ENCODE measurements at regions of chr1 and their contacts with region 1.

Region 1: DNA sequence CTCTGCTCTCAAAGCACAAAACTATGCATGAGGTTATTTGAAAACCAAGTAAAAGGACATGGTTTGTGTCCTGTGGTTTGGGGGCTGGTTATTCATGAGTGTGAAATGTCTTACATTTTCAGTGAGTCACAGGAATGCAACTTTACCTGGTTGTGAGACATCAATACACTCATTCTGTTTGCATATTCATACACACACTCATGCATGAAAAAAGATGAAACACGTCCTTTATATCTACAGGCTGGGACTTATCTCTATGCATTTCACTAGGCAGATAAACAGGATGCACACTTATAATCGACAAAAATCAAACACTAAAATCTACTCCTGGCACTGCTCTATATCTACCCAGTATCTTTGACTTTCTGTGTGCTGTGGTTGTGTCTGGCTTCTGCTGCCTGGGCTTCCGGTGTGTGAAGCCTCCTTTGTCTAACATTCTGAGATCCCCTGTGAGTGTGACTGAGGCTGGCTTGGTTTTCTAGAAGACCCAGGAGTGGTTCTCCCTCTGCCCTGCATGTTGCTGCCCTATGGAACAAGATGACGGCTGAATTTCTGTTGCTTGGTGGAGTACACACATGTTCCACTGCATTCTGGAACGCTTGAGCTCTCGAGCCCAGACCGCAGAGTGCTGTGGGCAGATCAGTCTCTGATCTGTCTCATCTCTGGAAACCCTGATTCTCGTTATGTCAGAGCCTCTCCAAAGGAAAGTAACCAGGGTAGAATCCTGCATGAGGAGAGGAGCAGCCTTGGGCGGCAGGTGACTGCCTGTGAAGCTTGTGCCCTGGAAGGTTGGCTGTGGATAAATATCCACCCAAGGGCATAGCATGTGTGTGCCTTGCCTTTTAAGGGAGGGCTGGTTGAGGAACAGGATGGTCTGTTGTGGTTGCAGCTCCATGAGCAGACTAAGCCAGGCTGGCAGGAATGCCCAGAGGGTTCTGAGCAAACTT is 19.7 kb upstream of the FASLG start:
- DNase-seq: peak; percentile 100
- ATAC-seq: peak; percentile 78
- H3K4me3 ChIP-seq: peak overlapping the region; percentile 36
- H3K27ac ChIP-seq: peak overlapping the region; percentile 78
- H3K4me1 ChIP-seq: peaks cover 71% of the 10 kb centered on the region
- H3K27me3 ChIP-seq: no peaks in the 10 kb centered on the region
- CTCF ChIP-seq: no peak

Region 2: GRCh38 chr1:172588296-172589291 is 50.6 kb before region 1 on chr1:
- CTCF ChIA-PET with region 1: interaction called, 3 read pairs
- POLR2A ChIA-PET with region 1: no interaction called
- intact Hi-C with region 1: loop called (anchors 1 kb)
- DNase-seq: peak; percentile 100
- ATAC-seq: peak; percentile 90
- H3K4me3 ChIP-seq: peak overlapping the region; percentile 46
- H3K27ac ChIP-seq: peak overlapping the region; percentile 75
- H3K4me1 ChIP-seq: peaks cover 61% of the 10 kb centered on the region
- H3K27me3 ChIP-seq: no peaks in the 10 kb centered on the region
- CTCF ChIP-seq: no peak

Region 3: GRCh38 chr1:172609528-172609927 is 29.6 kb before region 1 on chr1:
- CTCF ChIA-PET with region 1: interaction called, 4 read pairs
- POLR2A ChIA-PET with region 1: no interaction called
- intact Hi-C with region 1: loop called (anchors 1 kb)
- DNase-seq: peak; percentile 88
- ATAC-seq: peak; percentile 93
- H3K4me3 ChIP-seq: no peak overlapping the region
- H3K27ac ChIP-seq: no peak overlapping the region
- H3K4me1 ChIP-seq: 0 out of 2 replicates have a peak, but pooled peaks cover 8% of the 10 kb centered on the region
- H3K27me3 ChIP-seq: no peaks in the 10 kb centered on the region
- CTCF ChIP-seq: peak; percentile 99

Region 4: GRCh38 chr1:172670791-172671190 is 31.6 kb after region 1 on chr1:
- CTCF ChIA-PET with region 1: no interaction called
- POLR2A ChIA-PET with region 1: interaction called, 5 read pairs
- intact Hi-C with region 1: loop called (anchors 1 kb)
- DNase-seq: no peak
- ATAC-seq: no peak
- H3K4me3 ChIP-seq: no peak overlapping the region
- H3K27ac ChIP-seq: no peak overlapping the region
- H3K4me1 ChIP-seq: peaks cover 15% of the 10 kb centered on the region
- H3K27me3 ChIP-seq: no peaks in the 10 kb centered on the region
- CTCF ChIP-seq: no peak

Region 5: GRCh38 chr1:172686143-172686542 is 47.0 kb after region 1 on chr1:
- CTCF ChIA-PET with region 1: no interaction called
- POLR2A ChIA-PET with region 1: interaction called, 3 read pairs
- intact Hi-C with region 1: loop called (anchors 1 kb)
- DNase-seq: no peak
- ATAC-seq: no peak
- H3K4me3 ChIP-seq: no peak overlapping the region
- H3K27ac ChIP-seq: no peak overlapping the region
- H3K4me1 ChIP-seq: peaks cover 10% of the 10 kb centered on the region
- H3K27me3 ChIP-seq: no peaks in the 10 kb centered on the region
- CTCF ChIP-seq: no peak

Region 6: DNA sequence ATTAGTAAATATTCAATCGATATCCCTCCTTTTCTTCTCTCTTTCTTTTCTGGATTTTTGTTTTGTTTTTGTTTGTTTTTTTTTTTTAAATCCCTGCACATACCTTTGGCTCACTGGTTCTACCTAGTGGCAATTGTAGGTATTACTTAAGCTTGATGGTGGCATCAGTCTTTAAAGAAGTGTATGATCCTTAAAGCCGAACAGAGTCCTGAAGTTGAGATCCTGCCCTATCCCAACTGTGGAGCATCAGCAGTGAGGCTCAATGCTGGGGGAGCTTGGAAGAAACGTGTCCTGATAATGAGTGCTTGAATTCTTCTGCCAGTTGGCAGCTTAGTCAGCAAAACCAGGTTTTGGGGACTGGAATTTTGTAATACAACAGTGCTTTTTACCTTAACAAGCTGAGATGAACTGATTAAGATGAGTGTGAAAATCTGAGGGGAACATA is 80.6 kb after region 1 on chr1:
- CTCF ChIA-PET with region 1: interaction called, 12 read pairs
- POLR2A ChIA-PET with region 1: no interaction called
- intact Hi-C with region 1: loop called (anchors 1 kb)
- DNase-seq: peak; percentile 97
- ATAC-seq: peak; percentile 81
- H3K4me3 ChIP-seq: no peak overlapping the region
- H3K27ac ChIP-seq: no peak overlapping the region
- H3K4me1 ChIP-seq: peaks cover 32% of the 10 kb centered on the region
- H3K27me3 ChIP-seq: no peaks in the 10 kb centered on the region
- CTCF ChIP-seq: peak; percentile 100

Region 7: GRCh38 chr1:173009597-173009996 is 370.4 kb after region 1 on chr1:
- CTCF ChIA-PET with region 1: no interaction called
- POLR2A ChIA-PET with region 1: no interaction called
- intact Hi-C with region 1: no loop called
- DNase-seq: no peak
- ATAC-seq: no peak
- H3K4me3 ChIP-seq: no peak overlapping the region
- H3K27ac ChIP-seq: no peak overlapping the region
- H3K4me1 ChIP-seq: no peaks in the 10 kb centered on the region
- H3K27me3 ChIP-seq: no peaks in the 10 kb centered on the region
- CTCF ChIP-seq: no peak

Region 8: DNA sequence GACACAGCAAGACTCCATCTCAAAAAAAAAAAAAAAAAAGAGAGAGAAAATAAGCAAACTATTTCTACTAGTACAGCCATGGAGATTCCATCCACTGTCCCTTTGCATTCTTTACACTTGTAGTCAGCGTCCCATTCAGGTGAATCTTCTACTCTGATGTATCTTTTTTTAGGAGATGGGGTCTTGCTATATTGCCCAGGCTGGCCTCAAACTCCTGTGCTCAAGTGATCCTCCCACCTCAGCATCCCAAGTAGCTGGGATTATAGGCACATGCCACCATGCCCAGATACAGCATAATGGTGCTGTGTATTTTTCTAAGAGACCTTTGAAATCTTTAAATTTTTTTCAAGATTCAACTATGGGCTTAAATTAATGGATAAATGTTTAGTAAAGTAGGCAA is 1193.6 kb after region 1 on chr1:
- CTCF ChIA-PET with region 1: no interaction called
- POLR2A ChIA-PET with region 1: interaction called, 11 read pairs
- intact Hi-C with region 1: no loop called
- DNase-seq: no peak
- ATAC-seq: no peak
- H3K4me3 ChIP-seq: no peak overlapping the region
- H3K27ac ChIP-seq: no peak overlapping the region
- H3K4me1 ChIP-seq: peaks cover 8% of the 10 kb centered on the region
- H3K27me3 ChIP-seq: no peaks in the 10 kb centered on the region
- CTCF ChIP-seq: no peak